ENCODE measurements at regions of chr10 and their contacts with region 1.

Region 1: DNA sequence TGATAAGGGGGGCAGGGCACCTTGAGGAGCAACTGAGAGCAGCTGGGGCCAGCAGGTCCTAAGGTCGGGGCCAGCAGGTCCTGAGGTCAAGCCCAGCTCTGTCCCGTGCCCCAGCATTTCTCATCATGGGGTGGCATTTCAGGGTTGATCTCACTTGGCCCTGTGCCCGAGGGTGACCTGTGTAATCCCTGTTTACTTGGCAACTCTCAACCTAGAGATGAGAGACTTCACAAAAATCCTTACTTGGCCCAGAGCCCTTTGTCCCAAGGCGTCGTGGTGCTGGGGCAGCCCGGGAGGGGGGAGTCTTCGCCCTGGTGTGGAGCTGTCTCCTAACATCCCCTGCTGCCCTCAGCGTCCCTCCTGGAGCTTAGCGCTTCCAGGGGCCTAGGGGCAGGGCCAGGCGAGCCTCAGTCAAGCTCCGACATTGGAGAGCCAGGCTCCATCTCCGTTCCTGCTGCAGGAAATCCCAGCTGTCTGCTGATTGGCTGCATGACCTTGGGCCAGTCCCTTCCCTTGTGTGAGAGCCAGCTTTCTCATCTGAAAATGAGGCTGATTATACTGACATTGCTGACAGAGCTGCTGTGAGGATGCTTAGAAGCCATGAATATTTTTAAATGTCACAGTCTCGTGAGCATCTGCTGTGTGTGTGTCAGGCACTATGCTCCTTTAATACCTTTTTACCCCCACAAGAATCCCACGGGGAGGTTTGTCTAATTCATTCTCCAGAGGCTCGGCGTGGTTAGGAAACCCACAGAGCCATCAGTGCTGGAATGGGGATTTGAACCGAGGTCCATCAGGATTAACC is 94.3 kb downstream of the ZMIZ1 start:
- DNase-seq: no peak
- H3K4me3 ChIP-seq: no peak overlapping the region
- H3K27ac ChIP-seq: no peak overlapping the region; the same call in 1 of the 2 replicates
- H3K4me1 ChIP-seq: peaks cover 8 to 39% (median 24%) of the 10 kb centered on the region in 4 experiments
- H3K27me3 ChIP-seq: no peaks in the 10 kb centered on the region; a peak in 1 of 7 replicates
- CTCF ChIP-seq: no peak
- EP300 ChIP-seq: no peak
- POLR2A ChIP-seq: no peak
- RAD21 ChIP-seq: no peak

Region 2: DNA sequence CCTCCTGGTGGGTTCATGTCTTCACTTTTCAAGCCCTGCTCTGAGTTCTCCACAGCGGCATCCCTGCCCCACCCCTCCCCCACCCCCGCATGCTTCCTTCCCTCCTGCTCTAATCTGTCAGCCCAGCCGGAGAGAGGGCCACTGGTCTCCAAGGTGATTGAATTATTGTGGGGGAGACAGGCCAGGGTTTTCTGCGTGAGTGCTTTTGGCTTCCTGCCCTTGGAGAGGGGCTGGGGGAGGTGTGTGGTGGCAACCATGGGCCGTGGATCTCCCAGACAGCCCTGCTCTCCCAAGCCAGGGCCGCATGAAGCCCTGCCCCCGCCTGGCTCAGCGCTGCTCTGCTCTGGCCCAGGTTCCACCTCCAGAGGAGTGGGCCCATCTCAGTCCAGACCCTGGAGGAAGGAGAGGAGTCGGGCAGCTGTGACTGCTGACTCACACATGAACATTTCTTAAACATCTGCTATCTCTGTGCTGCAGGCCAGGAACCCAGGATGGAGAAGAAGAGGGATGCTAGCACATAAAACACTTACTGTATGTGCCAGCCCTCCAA is 15.6 kb after region 1 on chr10:
- CTCF ChIA-PET with region 1: interaction called, 48 read pairs
- POLR2A ChIA-PET with region 1: interaction called, 4 read pairs
- DNase-seq: no peak
- H3K4me3 ChIP-seq: no peak overlapping the region
- H3K27ac ChIP-seq: 0 out of 2 replicates have a peak overlapping the region, but pooled peaks have one; percentile 28
- H3K4me1 ChIP-seq: peaks cover 14 to 27% (median 19%) of the 10 kb centered on the region in 4 experiments
- H3K27me3 ChIP-seq: no peaks in the 10 kb centered on the region; a peak in 1 of 7 replicates
- CTCF ChIP-seq: no peak
- EP300 ChIP-seq: no peak
- POLR2A ChIP-seq: no peak
- RAD21 ChIP-seq: no peak

Region 3: DNA sequence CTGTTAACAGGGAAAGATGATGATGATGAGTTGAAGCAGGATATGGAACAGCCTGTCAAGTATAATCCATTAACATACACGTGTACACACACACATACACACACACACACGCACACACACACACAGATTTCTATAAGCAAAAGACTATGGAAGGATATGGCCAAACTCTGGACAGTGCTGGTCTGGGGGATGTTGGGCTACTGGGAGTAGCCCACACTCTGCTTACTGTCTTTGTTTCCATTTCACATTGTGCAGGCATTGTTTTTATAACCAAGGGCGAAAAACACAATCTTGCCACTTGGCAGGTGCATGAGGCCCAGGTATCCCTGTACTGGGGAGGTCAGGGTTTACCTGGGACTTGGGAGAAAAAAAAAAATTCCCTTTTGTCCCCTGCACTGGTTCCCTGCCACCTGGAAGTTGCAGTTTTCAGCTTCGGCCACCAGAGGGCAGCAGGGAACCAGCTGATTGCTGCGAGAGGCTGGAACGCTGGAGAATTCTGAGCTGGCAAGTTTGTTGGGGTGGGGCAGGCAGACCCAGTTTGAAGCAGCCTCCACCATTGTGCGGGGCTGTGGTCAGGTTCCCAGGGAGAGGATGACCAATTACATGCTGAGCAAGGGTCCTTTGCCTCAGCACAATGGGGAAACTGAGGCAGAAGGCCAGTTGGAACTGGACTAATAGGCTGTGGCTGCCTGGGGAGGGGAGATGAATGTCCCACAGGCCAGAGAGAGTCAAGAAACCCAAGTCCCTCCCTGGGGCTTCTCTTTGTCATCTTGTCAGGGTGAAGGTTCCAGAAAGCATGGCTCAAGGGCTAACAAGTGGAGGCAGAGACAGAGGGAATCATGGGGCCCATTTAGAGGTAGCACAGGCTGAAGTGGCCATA is 211.5 kb after region 1 on chr10:
- CTCF ChIA-PET with region 1: no interaction called
- POLR2A ChIA-PET with region 1: no interaction called
- DNase-seq: peak; percentile 59 to 94
- H3K4me3 ChIP-seq: no peak overlapping the region
- H3K27ac ChIP-seq: no peak overlapping the region
- H3K4me1 ChIP-seq: no peaks in the 10 kb centered on the region
- H3K27me3 ChIP-seq: no peaks in the 10 kb centered on the region; a peak in 2 of 7 replicates
- CTCF ChIP-seq: peak; percentile 86 to 97 (median 92)
- EP300 ChIP-seq: no peak
- POLR2A ChIP-seq: no peak
- RAD21 ChIP-seq: peak; percentile 99 to 100

Measured in H1 (cell line).